Transverse colon (tissue), 4 donors: ENCODE measurements at regions of chr6 and their contacts with region 1.

Region 1: DNA sequence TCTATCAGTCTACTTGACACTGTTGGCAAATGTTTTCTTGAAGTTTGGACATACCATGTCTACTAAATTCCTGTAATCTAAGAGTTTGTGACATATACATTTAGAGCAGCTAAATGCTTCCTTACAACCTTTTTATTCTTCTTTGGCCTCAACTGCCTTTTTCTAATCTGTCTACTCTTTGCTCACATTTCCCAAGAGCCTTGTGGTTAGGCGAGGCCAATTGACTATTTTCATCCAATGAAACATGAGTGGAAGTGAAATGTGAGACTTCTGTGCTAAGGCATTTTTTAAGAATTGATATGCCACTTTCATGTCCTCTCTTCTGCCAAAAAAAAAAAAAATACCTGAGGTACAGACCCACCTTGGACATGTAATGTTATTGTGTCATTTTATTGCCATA is 158.2 kb upstream of the MCHR2 start:
- DNase-seq: no peak
- H3K4me3 ChIP-seq: no peak overlapping the region
- H3K27ac ChIP-seq: no peak overlapping the region
- H3K4me1 ChIP-seq: no peaks in the 10 kb centered on the region
- H3K27me3 ChIP-seq: no peaks in the 10 kb centered on the region
- CTCF ChIP-seq: no peak
- EP300 ChIP-seq: no peak
- POLR2A ChIP-seq: no peak

Region 2: GRCh38 chr6:100126790-100127484 is 25.3 kb before region 1 on chr6:
- in situ Hi-C with region 1: no loop called
- intact Hi-C with region 1: loop called (anchors 1 kb)
- DNase-seq: no peak
- H3K4me3 ChIP-seq: no peak overlapping the region
- H3K27ac ChIP-seq: no peak overlapping the region
- H3K4me1 ChIP-seq: no peaks in the 10 kb centered on the region
- H3K27me3 ChIP-seq: no peaks in the 10 kb centered on the region
- CTCF ChIP-seq: no peak
- EP300 ChIP-seq: no peak
- POLR2A ChIP-seq: no peak

Region 3: DNA sequence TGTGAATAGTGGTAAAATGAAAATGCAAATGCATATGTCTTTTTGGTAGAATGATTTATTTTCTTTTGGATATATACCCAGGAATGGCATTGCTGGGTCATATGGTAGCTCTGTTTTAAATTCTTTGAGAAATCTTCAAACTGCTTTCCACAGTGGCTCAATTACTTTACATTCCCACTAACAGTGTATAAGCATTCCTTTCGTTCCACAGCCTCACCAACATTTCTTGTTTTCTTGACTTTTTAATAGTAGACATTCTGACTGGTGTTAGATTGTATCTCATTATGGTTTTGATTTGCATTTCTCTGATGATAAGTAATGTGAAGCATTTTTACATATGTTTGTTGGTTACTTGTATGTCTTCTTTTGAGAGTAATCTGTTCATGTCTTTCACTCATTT is 168.5 kb after region 1 on chr6:
- in situ Hi-C with region 1: no loop called
- intact Hi-C with region 1: no loop called
- DNase-seq: no peak
- H3K4me3 ChIP-seq: no peak overlapping the region
- H3K27ac ChIP-seq: no peak overlapping the region
- H3K4me1 ChIP-seq: no peaks in the 10 kb centered on the region
- H3K27me3 ChIP-seq: no peaks in the 10 kb centered on the region
- CTCF ChIP-seq: no peak
- EP300 ChIP-seq: no peak
- POLR2A ChIP-seq: no peak